ENCODE measurements at regions of chr2 and their contacts with region 1.

Region 1: DNA sequence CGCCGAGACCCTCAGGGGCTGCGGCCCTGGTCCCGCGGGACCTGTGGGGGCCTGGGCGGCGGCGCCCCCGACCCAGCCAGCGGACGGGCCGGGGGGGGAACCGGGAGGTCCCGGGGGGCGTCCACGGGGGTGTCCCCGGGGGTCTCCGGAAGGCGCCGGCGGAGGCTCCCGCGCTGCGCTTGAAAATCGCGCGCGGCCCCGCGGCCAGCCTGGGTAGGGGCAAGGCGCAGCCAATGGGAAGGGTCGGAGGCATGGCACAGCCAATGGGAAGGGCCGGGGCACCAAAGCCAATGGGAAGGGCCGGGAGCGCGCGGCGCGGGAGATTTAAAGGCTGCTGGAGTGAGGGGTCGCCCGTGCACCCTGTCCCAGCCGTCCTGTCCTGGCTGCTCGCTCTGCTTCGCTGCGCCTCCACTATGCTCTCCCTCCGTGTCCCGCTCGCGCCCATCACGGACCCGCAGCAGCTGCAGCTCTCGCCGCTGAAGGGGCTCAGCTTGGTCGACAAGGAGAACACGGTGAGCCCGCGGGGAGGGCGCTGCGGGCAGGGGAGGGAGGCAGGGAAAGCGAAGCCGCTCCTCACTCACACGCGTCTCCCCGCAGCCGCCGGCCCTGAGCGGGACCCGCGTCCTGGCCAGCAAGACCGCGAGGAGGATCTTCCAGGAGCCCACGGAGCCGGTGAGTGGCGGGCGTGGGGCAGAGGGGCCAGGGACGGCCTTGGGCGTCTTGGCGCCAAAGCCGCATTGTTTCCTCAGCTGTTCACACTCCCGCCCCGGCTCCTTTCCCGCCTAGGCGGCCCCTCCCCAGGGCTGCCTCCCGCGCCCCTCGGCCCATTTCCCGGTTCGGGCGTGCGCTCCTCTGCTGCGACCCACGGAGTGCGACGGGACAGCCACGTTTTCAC is at the start of gene RRM2:
- DNase-seq: peak; percentile 96
- CTCF ChIP-seq: no peak

Region 2: DNA sequence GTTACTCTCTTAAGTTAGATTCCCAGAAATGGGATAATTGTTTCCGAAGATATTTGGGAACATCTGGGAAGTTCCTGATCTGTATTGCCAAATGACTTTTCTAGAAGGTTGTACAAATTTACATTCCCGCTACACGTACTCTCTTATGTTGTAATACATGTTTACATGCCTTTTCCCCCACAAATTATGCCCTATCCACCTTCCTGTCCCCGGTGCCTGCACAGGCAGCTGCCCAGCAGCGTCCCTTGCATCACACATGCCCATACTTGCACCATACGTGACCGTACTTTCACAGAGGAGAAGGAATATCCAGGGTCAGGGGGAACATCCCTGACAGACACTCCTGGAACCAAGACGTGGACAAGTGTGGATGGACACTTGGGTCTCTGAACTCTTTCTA is 103.5 kb before region 1 on chr2:
- CTCF ChIA-PET with region 1: no interaction called
- POLR2A ChIA-PET with region 1: no interaction called
- DNase-seq: no peak
- CTCF ChIP-seq: no peak

Region 3: GRCh38 chr2:10048501-10049171 is 74.0 kb before region 1 on chr2:
- CTCF ChIA-PET with region 1: no interaction called
- POLR2A ChIA-PET with region 1: no interaction called
- DNase-seq: peak; percentile 66
- CTCF ChIP-seq: peak; percentile 45

Region 4: GRCh38 chr2:10072656-10073480 is 49.8 kb before region 1 on chr2:
- CTCF ChIA-PET with region 1: interaction called, 13 read pairs
- POLR2A ChIA-PET with region 1: no interaction called
- DNase-seq: peak; percentile 90
- CTCF ChIP-seq: peak; percentile 83

Region 5: GRCh38 chr2:10103179-10103732 is 19.4 kb before region 1 on chr2:
- CTCF ChIA-PET with region 1: interaction called, 22 read pairs
- POLR2A ChIA-PET with region 1: no interaction called
- DNase-seq: no peak
- CTCF ChIP-seq: no peak

Region 6: GRCh38 chr2:10135296-10136089 is 12.9 kb after region 1 on chr2:
- CTCF ChIA-PET with region 1: interaction called, 31 read pairs
- POLR2A ChIA-PET with region 1: no interaction called
- DNase-seq: no peak
- CTCF ChIP-seq: no peak

Region 7: GRCh38 chr2:10157293-10157692 is 34.7 kb after region 1 on chr2:
- CTCF ChIA-PET with region 1: interaction called, 11 read pairs
- POLR2A ChIA-PET with region 1: no interaction called
- DNase-seq: no peak
- CTCF ChIP-seq: no peak

Region 8: GRCh38 chr2:10369269-10370255 is 246.9 kb after region 1 on chr2:
- CTCF ChIA-PET with region 1: no interaction called
- POLR2A ChIA-PET with region 1: no interaction called
- DNase-seq: no peak
- CTCF ChIP-seq: no peak

Region 9: GRCh38 chr2:10382354-10383061 is 259.9 kb after region 1 on chr2:
- CTCF ChIA-PET with region 1: no interaction called
- POLR2A ChIA-PET with region 1: no interaction called
- DNase-seq: no peak
- CTCF ChIP-seq: no peak

Measured in GM10248 (cell line).